B cell (primary cell): ENCODE measurements at regions of chr4 and their contacts with region 1.

Region 1: DNA sequence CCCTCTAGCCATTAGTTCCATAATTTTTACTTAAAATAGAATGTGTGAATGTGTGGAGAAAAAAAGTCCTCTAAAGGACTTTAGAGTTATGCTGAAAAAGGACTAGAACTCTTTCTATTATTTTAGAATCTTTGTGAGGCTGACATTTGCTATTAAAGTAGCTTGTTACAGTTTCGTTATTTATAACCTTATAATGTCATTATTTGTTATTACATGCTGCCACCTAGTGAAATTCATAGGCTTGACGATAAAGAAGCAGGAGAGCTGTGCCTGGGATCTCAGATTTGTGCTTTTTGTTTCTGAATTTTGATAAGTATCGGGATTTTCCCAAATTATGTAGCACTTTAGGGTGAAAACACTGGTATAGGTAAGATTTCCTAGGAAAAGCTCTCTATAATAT is 38.5 kb upstream of the TAPT1 start:
- DNase-seq: peak; percentile 73
- ATAC-seq: peak; percentile 43
- H3K4me3 ChIP-seq: no peak overlapping the region
- H3K4me3 Mint-ChIP-seq: no peak overlapping the region
- H3K27ac ChIP-seq: peak overlapping the region in 1 of 2 donors; percentile 3
- H3K27ac Mint-ChIP-seq: no peak overlapping the region
- H3K4me1 ChIP-seq: peaks cover 36 to 44% of the 10 kb centered on the region in 2 donors
- H3K4me1 Mint-ChIP-seq: peaks cover 36% of the 10 kb centered on the region
- H3K27me3 ChIP-seq: no peaks in the 10 kb centered on the region
- H3K27me3 Mint-ChIP-seq: no peaks in the 10 kb centered on the region
- CTCF ChIP-seq: peak; percentile 78

Region 2: DNA sequence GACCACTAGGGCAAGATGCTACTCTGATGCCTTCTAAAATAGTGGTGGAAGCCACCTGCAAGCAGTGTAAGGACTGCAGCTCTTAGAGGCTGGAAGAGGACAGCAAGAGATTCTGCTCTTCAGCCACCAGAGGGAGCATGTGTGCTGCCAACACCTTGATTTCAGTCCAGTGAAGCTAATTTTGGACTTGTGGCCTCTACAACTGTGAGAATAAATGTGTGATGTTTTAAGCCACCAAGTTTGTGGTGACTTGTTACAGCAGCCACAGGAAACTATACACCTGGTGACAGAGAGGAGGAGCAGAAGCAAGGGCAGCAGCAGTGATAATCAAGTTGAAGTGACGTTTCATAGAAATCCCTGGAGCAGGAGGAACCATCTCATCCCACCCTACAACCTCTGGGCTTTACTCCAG is 382.1 kb before region 1 on chr4:
- CTCF ChIA-PET with region 1: interaction called, 38 read pairs
- POLR2A ChIA-PET with region 1: no interaction called
- intact Hi-C with region 1: loop called (anchors 1 kb)
- DNase-seq: peak; percentile 71
- ATAC-seq: peak; percentile 65
- H3K4me3 ChIP-seq: no peak overlapping the region
- H3K4me3 Mint-ChIP-seq: no peak overlapping the region
- H3K27ac ChIP-seq: no peak overlapping the region
- H3K27ac Mint-ChIP-seq: no peak overlapping the region
- H3K4me1 ChIP-seq: no peaks in the 10 kb centered on the region
- H3K4me1 Mint-ChIP-seq: peaks cover 2% of the 10 kb centered on the region
- H3K27me3 ChIP-seq: peaks cover 0 to 3% (median 0%) of the 10 kb centered on the region in 4 experiments
- H3K27me3 Mint-ChIP-seq: peaks cover 4% of the 10 kb centered on the region
- CTCF ChIP-seq: peak; percentile 91

Region 3: DNA sequence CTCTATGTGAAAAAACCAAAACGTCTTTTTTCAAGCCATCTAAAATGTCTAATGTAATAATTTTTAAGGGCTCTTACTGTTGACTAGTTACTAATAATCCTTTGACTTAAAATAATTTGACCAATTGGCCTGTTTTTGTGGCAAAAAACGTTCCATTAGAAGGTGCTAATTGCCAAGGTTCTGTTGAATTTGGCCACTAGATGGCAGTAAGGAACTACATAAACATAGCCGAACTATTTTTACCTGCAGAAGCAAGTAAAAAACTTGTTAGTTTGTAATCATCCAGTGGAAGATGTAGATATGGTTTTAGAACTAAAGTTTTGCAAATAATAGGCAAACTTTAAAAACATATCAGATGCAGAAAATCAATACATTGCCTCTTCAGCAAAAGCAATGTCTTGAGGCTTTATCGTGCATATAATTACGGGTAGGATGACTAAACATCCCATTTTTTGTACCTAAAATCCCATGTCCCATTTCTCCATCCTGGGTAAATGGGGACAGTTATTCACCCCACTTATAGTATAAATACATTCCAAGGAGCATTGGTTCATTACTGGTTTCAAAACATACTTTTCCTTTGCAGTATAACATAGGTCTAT is 238.5 kb before region 1 on chr4:
- CTCF ChIA-PET with region 1: interaction called, 105 read pairs
- POLR2A ChIA-PET with region 1: no interaction called
- intact Hi-C with region 1: loop called (anchors 1 kb)
- DNase-seq: peak; percentile 75
- ATAC-seq: peak; percentile 49
- H3K4me3 ChIP-seq: no peak overlapping the region
- H3K4me3 Mint-ChIP-seq: no peak overlapping the region
- H3K27ac ChIP-seq: no peak overlapping the region
- H3K27ac Mint-ChIP-seq: no peak overlapping the region
- H3K4me1 ChIP-seq: peaks cover 0 to under 1% of the 10 kb centered on the region in 2 donors
- H3K4me1 Mint-ChIP-seq: no peaks in the 10 kb centered on the region
- H3K27me3 ChIP-seq: peaks cover 0 to 6% (median 1%) of the 10 kb centered on the region in 4 experiments
- H3K27me3 Mint-ChIP-seq: peaks cover 21% of the 10 kb centered on the region
- CTCF ChIP-seq: peak; percentile 90

Region 4: DNA sequence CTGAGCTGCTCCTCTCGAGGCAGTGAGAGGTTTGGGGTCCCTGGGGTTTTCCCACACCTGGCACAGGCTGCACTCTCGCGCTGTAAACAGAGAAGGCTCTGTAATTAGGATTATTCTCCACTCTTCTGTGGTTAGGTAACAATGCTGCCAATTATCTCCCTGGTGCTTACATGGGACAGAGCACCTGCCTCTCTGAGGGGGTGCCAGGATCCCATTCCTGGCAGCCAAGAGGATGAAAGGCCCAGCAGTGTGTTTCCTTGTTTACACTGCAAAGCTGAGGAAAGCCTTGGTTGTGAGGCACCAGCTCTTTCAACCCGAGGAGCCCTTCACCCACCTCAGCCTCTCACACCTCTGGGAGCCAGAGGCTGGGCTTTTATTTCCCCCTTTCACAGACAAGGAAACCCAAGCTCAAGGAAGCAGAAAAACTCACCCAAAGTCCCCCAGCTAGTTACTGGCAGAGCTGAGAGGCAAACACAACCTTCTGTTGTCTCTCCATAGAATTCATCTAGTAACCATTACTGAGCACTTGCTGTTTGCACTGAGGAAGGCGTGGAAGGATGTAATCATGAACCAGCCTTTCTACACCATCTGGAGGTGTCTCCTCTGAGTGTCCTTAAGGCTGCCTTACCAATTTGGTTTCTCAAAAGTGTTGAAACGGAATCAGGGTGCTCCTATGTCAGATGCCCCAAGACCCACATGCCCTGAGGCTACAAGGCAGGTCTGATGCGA is 141.3 kb before region 1 on chr4:
- CTCF ChIA-PET with region 1: no interaction called
- POLR2A ChIA-PET with region 1: no interaction called
- intact Hi-C with region 1: no loop called
- DNase-seq: no peak
- ATAC-seq: no peak
- H3K4me3 ChIP-seq: no peak overlapping the region
- H3K4me3 Mint-ChIP-seq: no peak overlapping the region
- H3K27ac ChIP-seq: no peak overlapping the region
- H3K27ac Mint-ChIP-seq: no peak overlapping the region
- H3K4me1 ChIP-seq: peaks cover 14 to 15% of the 10 kb centered on the region in 2 donors
- H3K4me1 Mint-ChIP-seq: peaks cover 13% of the 10 kb centered on the region
- H3K27me3 ChIP-seq: no peaks in the 10 kb centered on the region
- H3K27me3 Mint-ChIP-seq: no peaks in the 10 kb centered on the region
- CTCF ChIP-seq: no peak

Region 5: DNA sequence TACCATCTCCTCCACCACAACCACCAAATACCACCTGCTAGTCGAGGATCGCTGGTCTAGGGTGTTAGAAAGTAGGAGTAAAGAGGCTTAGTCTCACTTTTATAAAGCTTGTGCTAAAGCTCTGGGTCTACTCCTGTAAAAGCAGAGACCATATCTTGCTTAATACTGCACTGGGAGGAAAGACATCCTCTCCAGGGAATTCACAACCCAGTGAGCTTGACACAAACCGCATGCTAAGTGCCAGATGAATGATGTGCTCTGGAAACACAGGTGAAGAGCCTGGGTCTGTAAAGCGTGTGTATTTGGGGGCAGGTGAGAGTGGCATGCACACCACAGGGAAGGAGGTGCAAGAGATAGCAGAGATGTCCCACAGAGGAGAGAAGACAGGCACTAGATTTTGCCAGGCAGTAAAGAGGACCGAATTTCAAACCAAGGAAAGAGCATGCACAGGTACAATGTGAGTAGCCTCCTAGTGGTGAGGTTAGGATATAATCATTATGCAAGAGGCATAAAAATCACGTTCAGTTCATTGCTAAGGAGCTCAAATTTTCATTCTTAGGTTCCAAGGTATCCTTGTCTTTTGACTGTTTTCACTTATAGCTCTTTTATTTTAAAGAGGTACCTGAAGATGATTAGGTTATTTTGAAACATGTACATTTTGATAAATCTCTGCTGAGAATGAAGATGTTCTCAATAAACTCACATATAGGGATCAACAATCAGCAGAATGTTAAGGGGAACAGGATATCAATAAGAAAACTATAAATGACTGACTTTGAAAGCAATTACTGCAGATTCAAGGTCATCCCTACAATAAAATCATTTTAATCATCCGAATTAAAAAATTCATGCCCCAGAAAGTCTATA is 59.3 kb before region 1 on chr4:
- CTCF ChIA-PET with region 1: interaction called, 48 read pairs
- POLR2A ChIA-PET with region 1: interaction called, 3 read pairs
- intact Hi-C with region 1: loop called (anchors 2 kb)
- DNase-seq: peak; percentile 78
- ATAC-seq: peak; percentile 72
- H3K4me3 ChIP-seq: no peak overlapping the region
- H3K4me3 Mint-ChIP-seq: peak overlapping the region; percentile 54
- H3K27ac ChIP-seq: no peak overlapping the region
- H3K27ac Mint-ChIP-seq: peak overlapping the region; percentile 76
- H3K4me1 ChIP-seq: peaks cover 19 to 25% of the 10 kb centered on the region in 2 donors
- H3K4me1 Mint-ChIP-seq: peaks cover 42% of the 10 kb centered on the region
- H3K27me3 ChIP-seq: no peaks in the 10 kb centered on the region
- H3K27me3 Mint-ChIP-seq: no peaks in the 10 kb centered on the region
- CTCF ChIP-seq: peak; percentile 86

Region 6: DNA sequence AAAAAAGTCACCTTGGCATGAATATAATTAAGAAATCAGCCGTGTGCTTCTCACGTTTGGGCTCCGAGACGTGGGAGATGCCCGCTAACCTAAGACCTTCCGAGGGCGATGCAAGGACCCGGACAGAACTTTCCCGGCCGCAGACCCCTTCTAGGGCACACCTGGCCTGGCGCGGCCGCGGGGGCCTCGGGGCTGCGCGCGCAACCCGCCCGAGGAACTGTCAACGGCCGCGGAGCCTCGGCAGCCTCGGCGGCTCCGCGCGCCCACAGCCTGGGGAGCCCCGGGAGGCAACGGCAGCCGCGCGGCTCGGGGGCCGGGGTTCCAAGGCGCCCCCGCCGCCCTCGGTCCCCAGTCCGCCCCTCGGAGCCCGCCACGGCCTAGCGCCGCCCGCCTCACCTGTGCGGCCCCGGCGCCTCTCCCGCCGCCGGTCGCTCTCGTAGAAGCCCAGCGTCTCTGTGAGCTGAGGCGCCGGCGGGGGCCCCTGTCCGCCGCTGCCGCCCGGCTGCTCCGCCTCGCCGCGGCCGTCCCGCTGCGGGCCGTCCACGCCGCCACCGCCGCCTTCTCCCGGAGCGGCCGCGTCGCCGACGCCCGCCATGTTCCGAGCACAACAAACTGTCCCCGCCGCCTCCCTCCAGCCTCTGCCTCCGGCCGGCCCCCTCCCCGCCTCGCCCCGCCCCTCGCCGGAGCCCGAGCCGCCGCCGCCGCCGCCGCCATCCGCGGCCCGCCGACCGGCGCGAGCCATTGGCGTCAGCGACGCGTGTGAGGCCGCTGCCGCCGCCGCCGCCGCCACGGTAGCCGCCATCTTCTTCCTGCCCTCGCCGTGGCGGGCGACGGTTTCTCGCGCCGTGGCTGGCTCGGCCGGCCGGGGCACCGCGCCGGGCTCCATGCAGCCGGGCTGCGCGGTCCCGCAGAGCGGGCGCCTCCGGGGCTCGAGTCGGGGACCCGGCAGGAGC is 38.7 kb before region 1 on chr4 and contains the start of gene TAPT1:
- CTCF ChIA-PET with region 1: interaction called, 11 read pairs
- POLR2A ChIA-PET with region 1: no interaction called
- intact Hi-C with region 1: loop called (anchors 5 kb)
- DNase-seq: peak; percentile 88
- ATAC-seq: peak; percentile 80
- H3K4me3 ChIP-seq: peak within 1 kb of the TSS; percentile 77 to 95 (median 87)
- H3K4me3 Mint-ChIP-seq: peak within 1 kb of the TSS; percentile 99
- H3K27ac ChIP-seq: peak within 1 kb of the TSS; percentile 69 to 92
- H3K27ac Mint-ChIP-seq: peak within 1 kb of the TSS; percentile 99
- H3K4me1 ChIP-seq: peaks cover 33 to 54% of the 10 kb centered on the region in 2 donors
- H3K4me1 Mint-ChIP-seq: peaks cover 66% of the 10 kb centered on the region
- H3K27me3 ChIP-seq: no peaks in the 10 kb centered on the region
- H3K27me3 Mint-ChIP-seq: no peaks in the 10 kb centered on the region
- CTCF ChIP-seq: no peak
- total RNA-seq, gene TAPT1: 76.0 and 88.5 TPM in 2 replicates

Region 7: DNA sequence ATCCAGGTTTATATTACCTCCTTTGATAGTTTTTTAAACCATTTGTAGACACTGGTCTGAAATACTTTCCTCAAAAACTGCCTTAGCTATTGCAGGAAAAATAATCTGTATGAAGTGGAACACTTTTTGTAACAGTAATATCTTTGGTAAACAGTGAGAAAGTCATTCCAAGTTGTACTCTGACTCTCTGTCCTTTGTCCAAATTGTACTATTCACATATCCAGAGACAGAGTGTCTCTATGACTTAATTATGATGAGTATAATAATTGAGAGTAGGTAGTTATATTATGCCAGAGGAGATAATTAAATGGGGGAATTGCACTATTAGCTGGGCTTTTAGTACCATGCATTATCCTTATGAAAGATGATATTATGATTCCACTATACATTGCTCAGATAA is 1869.3 kb after region 1 on chr4:
- CTCF ChIA-PET with region 1: no interaction called
- POLR2A ChIA-PET with region 1: no interaction called
- intact Hi-C with region 1: no loop called
- DNase-seq: no peak
- ATAC-seq: no peak
- H3K4me3 ChIP-seq: no peak overlapping the region
- H3K4me3 Mint-ChIP-seq: no peak overlapping the region
- H3K27ac ChIP-seq: no peak overlapping the region
- H3K27ac Mint-ChIP-seq: no peak overlapping the region
- H3K4me1 ChIP-seq: no peaks in the 10 kb centered on the region
- H3K4me1 Mint-ChIP-seq: no peaks in the 10 kb centered on the region
- H3K27me3 ChIP-seq: peaks cover 0 to 7% (median 0%) of the 10 kb centered on the region in 4 experiments
- H3K27me3 Mint-ChIP-seq: peaks cover 18% of the 10 kb centered on the region
- CTCF ChIP-seq: no peak